Activated B cell treated with CpG ODN at 0.5 μM for 24 hours (primary cell): ENCODE measurements at regions of chr4 and their contacts with region 1.

Region 1: DNA sequence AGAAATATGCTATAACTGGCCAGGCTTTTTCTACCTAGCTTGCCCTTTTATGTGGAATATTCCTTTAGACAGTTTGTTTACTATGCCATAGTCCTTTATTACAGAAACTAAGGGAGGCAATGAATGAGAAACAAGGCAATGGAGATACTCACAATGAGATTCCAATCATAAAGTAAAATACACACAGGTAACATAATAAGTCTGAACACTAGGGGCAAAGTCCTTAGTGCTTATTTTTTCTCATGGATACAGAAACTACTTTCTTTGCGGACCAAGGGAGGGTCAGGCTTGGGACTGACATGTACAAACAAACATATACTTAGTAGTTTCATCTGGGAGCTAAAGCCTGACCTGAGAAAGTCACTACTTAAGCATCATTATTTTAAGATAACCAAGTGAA is 16.0 kb upstream of the UGT8 start:
- DNase-seq: no peak
- ATAC-seq: no peak
- H3K4me3 Mint-ChIP-seq: no peak overlapping the region
- H3K27ac Mint-ChIP-seq: no peak overlapping the region
- H3K4me1 Mint-ChIP-seq: no peaks in the 10 kb centered on the region
- H3K27me3 Mint-ChIP-seq: peaks cover 2% of the 10 kb centered on the region
- CTCF ChIP-seq: no peak

Region 2: DNA sequence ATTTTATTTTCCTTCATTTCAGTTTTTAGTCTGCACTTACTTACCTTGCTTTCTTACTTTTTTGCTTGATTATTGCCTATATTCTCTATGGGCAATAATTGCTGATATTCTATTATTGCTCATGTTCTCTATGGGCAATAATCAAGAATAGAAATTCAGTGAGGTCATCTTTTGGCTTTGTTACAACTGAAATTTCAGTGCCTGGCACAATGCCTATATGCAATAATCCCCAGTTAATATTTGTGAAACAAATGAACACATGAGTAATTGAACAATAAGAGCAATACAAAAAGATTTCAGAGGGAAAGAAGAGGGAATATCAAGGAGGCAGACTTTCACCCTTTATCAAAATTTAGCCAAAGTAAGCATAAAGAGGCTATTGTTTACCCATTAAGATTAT is 554.5 kb before region 1 on chr4:
- CTCF ChIA-PET with region 1: no interaction called
- POLR2A ChIA-PET with region 1: no interaction called
- intact Hi-C with region 1: no loop called
- DNase-seq: no peak
- ATAC-seq: no peak
- H3K4me3 Mint-ChIP-seq: no peak overlapping the region
- H3K27ac Mint-ChIP-seq: no peak overlapping the region
- H3K4me1 Mint-ChIP-seq: no peaks in the 10 kb centered on the region
- H3K27me3 Mint-ChIP-seq: no peaks in the 10 kb centered on the region
- CTCF ChIP-seq: no peak

Region 3: GRCh38 chr4:114539985-114540384 is 42.6 kb before region 1 on chr4:
- CTCF ChIA-PET with region 1: no interaction called
- POLR2A ChIA-PET with region 1: no interaction called
- intact Hi-C with region 1: loop called (anchors 5 kb)
- DNase-seq: no peak
- ATAC-seq: no peak
- H3K4me3 Mint-ChIP-seq: no peak overlapping the region
- H3K27ac Mint-ChIP-seq: no peak overlapping the region
- H3K4me1 Mint-ChIP-seq: no peaks in the 10 kb centered on the region
- H3K27me3 Mint-ChIP-seq: no peaks in the 10 kb centered on the region
- CTCF ChIP-seq: no peak